ENCODE measurements at regions of chr14 and their contacts with region 1.

Region 1: GRCh38 chr14:54730156-54730961 is 163.4 kb downstream of the SAMD4A start:
- DNase-seq: peak; percentile 74
- H3K4me3 Mint-ChIP-seq: peak overlapping the region; percentile 58
- H3K27ac Mint-ChIP-seq: peak overlapping the region; percentile 96
- H3K4me1 Mint-ChIP-seq: peaks cover 33% of the 10 kb centered on the region
- H3K27me3 Mint-ChIP-seq: peaks cover 3% of the 10 kb centered on the region

Region 2: GRCh38 chr14:54435500-54435981 is 294.8 kb before region 1 on chr14:
- CTCF ChIA-PET with region 1: no interaction called
- intact Hi-C with region 1: loop called (anchors 1 kb)
- DNase-seq: peak; percentile 16
- H3K4me3 Mint-ChIP-seq: peak overlapping the region; percentile 3
- H3K27ac Mint-ChIP-seq: peak overlapping the region; percentile 80
- H3K4me1 Mint-ChIP-seq: peaks cover 81% of the 10 kb centered on the region
- H3K27me3 Mint-ChIP-seq: no peaks in the 10 kb centered on the region

Region 3: DNA sequence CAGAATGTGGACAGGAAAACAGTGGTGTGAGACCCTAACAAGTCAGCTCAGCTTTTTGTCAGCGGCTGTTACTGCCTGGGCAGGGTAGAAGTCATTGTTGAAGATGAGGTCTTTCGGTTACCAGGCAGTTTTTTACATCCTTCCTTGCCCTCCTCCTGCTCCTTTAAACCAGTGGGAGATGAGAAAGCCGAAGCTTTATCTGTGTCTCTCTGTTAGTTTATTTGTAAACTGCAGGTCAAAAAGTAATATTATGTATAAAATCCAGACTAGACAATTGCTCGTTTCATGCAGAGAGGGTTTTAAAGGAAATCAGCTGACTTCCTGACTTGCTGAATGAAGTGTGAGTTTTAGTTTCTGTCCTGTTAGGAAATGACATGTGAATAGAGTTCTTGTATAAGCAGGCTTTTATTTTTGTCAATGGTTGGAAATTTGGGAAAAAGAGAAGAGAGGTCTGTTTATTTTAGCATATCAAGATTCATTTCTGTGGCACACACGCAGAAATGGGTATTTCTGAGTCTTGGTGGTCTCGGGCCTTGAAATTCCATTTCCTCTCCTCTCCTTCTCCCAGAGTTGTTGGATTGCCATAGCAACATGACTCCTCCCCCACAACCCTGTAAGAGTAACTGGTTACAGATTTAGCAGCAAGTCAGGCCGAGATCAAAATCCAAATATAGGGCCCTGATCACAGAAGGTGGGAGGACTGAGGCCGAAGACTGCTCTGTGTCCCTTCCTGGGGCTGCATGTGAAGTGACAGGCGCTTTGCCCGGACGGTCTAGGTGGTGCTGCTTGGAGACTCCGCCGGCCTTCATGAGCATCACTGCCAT is 102.6 kb before region 1 on chr14:
- CTCF ChIA-PET with region 1: no interaction called
- intact Hi-C with region 1: loop called (anchors 1 kb)
- DNase-seq: peak; percentile 62
- H3K4me3 Mint-ChIP-seq: peak overlapping the region; percentile 61
- H3K27ac Mint-ChIP-seq: peak overlapping the region; percentile 86
- H3K4me1 Mint-ChIP-seq: peaks cover 57% of the 10 kb centered on the region
- H3K27me3 Mint-ChIP-seq: no peaks in the 10 kb centered on the region

Region 4: GRCh38 chr14:54709444-54709843 is 20.9 kb before region 1 on chr14:
- CTCF ChIA-PET with region 1: interaction called, 4 read pairs
- intact Hi-C with region 1: loop called (anchors 1 kb)
- DNase-seq: peak; percentile 20
- H3K4me3 Mint-ChIP-seq: no peak overlapping the region
- H3K27ac Mint-ChIP-seq: no peak overlapping the region
- H3K4me1 Mint-ChIP-seq: peaks cover 17% of the 10 kb centered on the region
- H3K27me3 Mint-ChIP-seq: no peaks in the 10 kb centered on the region

Region 5: GRCh38 chr14:54805521-54806322 is 75.4 kb after region 1 on chr14:
- CTCF ChIA-PET with region 1: interaction called, 7 read pairs
- intact Hi-C with region 1: loop called (anchors 2 kb)
- DNase-seq: peak; percentile 90
- H3K4me3 Mint-ChIP-seq: peak overlapping the region; percentile 6
- H3K27ac Mint-ChIP-seq: no peak overlapping the region
- H3K4me1 Mint-ChIP-seq: peaks cover 6% of the 10 kb centered on the region
- H3K27me3 Mint-ChIP-seq: peaks cover 11% of the 10 kb centered on the region

Region 6: DNA sequence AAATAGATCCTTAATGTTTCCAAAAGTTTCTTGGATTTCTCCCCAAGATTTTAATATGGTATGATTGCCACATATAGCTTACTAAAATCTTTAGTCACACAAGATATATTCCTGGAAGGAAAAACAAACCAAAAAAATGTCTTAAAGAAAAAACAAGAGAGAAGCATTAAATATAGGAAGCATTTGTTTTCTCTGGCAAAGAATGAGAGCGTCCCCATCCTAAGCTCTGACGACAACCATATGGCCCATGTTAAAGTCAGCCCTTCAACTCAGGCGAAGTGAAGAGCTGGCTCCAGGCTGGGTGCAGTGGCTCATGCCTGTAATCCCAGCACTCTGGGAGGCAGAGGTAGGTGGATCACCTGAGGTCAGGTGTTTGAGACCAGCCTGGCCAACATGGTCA is 136.7 kb after region 1 on chr14:
- CTCF ChIA-PET with region 1: no interaction called
- intact Hi-C with region 1: no loop called
- DNase-seq: no peak
- H3K4me3 Mint-ChIP-seq: no peak overlapping the region
- H3K27ac Mint-ChIP-seq: no peak overlapping the region
- H3K4me1 Mint-ChIP-seq: peaks cover 19% of the 10 kb centered on the region
- H3K27me3 Mint-ChIP-seq: no peaks in the 10 kb centered on the region